WTC11 (cell line): ENCODE measurements at regions of chr1 and their contacts with region 1.

Region 1: GRCh38 chr1:32521165-32521564 is 18.1 kb upstream of the ZBTB8A start:
- DNase-seq: no peak
- ATAC-seq: peak; percentile 16; the same call in 1 of the 2 replicates
- H3K4me3 Mint-ChIP-seq: peak overlapping the region; percentile 67
- H3K27ac Mint-ChIP-seq: 0 out of 2 replicates have a peak overlapping the region, but pooled peaks have one; percentile 87
- H3K4me1 Mint-ChIP-seq: peaks cover 2% of the 10 kb centered on the region; the same call in 1 of the 2 replicates
- H3K27me3 Mint-ChIP-seq: no peaks in the 10 kb centered on the region; the same call in none of the 2 replicates
- CTCF ChIP-seq: no peak

Region 2: DNA sequence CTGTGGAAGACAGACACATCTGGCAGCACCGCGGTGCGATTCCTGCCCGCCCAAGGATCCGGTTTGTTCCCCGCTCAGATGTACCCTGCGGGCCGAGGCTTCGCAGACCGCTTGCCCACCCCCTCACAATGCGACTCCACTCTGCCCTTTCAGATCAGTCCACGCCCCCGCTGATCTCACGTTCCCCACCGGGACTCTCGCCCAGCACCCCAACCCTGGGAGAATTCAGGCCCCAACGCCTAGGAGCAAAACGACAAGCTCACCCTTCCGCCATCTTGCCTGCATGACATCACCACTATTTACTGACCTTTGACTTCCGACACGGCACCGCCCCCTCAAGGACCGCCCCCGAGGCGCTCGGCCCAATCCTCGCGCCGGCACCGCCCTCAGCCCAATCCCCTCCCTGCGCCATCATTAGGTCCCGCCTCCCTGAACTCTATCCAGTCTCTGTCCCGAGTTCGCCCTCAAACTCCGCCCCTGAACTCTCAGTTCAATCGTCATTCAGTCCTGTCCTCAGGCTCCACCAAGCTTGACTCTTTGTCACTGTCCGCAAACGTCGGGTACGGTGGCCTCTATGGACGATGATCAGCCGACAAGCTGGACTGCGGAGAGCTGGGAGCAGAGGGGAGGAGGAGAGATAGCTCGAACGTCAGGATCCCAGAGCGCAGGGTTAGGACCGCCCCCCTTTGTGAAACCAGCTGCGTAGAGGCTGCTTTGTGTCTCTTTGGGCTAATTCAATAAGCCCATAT is 126.8 kb before region 1 on chr1 and contains the start of gene BSDC1:
- CTCF ChIA-PET with region 1: interaction called, 21 read pairs
- POLR2A ChIA-PET with region 1: interaction called, 4 read pairs
- DNase-seq: peak; percentile 99
- ATAC-seq: peak; percentile 97
- H3K4me3 Mint-ChIP-seq: peak within 1 kb of the TSS; percentile 98
- H3K27ac Mint-ChIP-seq: peak within 1 kb of the TSS; percentile 100
- H3K4me1 Mint-ChIP-seq: peaks cover 12% of the 10 kb centered on the region
- H3K27me3 Mint-ChIP-seq: no peaks in the 10 kb centered on the region
- CTCF ChIP-seq: no peak
- total RNA-seq, gene BSDC1: 42.4 to 44.3 TPM (median 43.6 TPM) in 3 replicates

Region 3: GRCh38 chr1:32448773-32449456 is 72.2 kb before region 1 on chr1:
- CTCF ChIA-PET with region 1: interaction called, 16 read pairs
- POLR2A ChIA-PET with region 1: no interaction called
- DNase-seq: peak; percentile 56
- ATAC-seq: no peak
- H3K4me3 Mint-ChIP-seq: no peak overlapping the region
- H3K27ac Mint-ChIP-seq: no peak overlapping the region
- H3K4me1 Mint-ChIP-seq: peaks cover 37% of the 10 kb centered on the region
- H3K27me3 Mint-ChIP-seq: peaks cover 7% of the 10 kb centered on the region
- CTCF ChIP-seq: peak; percentile 42; the same call in 1 of the 2 replicates

Region 4: DNA sequence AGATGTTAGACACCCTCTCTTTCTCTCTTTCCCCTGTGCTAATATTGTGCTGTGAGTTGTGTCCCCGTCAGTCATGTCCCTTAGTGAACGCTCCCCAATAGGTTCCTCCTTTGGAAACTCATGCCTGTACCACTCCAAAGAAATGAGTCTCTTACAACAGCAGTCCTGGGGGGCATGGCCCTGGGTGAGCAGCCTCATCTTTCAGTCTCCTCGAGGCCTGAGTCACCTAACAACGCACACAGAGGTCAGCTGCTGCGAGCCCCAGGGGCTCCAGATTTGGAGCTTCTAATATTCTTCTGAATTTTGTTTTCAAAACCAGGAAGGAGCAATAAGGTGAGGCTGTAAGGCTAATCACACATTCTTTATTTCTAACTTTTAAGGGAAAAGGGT is 12.4 kb before region 1 on chr1:
- CTCF ChIA-PET with region 1: interaction called, 21 read pairs
- POLR2A ChIA-PET with region 1: interaction called, 6 read pairs
- DNase-seq: no peak
- ATAC-seq: no peak
- H3K4me3 Mint-ChIP-seq: no peak overlapping the region
- H3K27ac Mint-ChIP-seq: no peak overlapping the region
- H3K4me1 Mint-ChIP-seq: no peaks in the 10 kb centered on the region
- H3K27me3 Mint-ChIP-seq: no peaks in the 10 kb centered on the region; the same call in 1 of the 2 replicates
- CTCF ChIP-seq: no peak

Region 5: DNA sequence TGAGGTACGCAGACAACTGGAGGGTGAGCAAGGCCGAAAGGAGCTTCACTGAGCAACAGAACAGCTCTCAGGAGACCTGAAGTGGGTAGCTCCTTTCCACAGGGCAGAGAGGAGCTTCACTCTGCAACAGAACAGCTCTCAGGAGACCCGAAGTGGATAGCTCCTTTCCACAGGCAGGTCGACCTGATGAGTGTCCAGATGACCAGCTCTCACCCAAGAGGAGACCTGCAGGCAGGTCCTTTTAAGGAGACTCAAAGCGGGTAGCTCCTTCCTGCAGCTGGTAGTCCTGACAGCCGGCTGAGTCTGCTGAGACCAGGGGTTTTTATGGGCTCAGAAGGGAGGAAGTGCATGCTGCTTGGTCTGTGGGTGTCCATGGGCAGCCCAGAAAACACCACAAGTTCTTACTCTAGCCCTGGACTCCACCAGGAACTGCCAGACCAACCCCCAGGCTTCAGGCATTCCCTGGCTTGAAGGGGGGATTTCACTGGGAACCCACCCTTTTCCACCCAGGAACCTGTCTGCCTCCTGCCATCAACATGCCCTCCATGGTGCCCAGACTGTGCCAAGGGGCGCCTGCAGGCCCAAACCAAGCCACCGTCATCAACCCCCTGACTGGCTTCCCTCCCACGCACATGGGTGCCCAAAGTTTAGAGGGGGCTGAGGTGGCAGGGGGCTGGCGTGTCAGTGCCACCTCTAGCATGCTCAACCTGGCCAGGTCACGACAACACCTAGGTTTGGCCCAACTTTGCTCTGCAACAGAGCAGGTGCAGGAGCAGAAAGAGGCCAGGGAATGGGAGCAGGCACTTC is 85.6 kb after region 1 on chr1:
- CTCF ChIA-PET with region 1: interaction called, 14 read pairs
- POLR2A ChIA-PET with region 1: no interaction called
- DNase-seq: no peak
- ATAC-seq: no peak
- H3K4me3 Mint-ChIP-seq: no peak overlapping the region
- H3K27ac Mint-ChIP-seq: no peak overlapping the region
- H3K4me1 Mint-ChIP-seq: no peaks in the 10 kb centered on the region
- H3K27me3 Mint-ChIP-seq: no peaks in the 10 kb centered on the region
- CTCF ChIP-seq: no peak

Region 6: GRCh38 chr1:32619701-32620485 is 98.7 kb after region 1 on chr1:
- CTCF ChIA-PET with region 1: interaction called, 15 read pairs
- POLR2A ChIA-PET with region 1: no interaction called
- DNase-seq: no peak
- ATAC-seq: no peak
- H3K4me3 Mint-ChIP-seq: no peak overlapping the region
- H3K27ac Mint-ChIP-seq: no peak overlapping the region
- H3K4me1 Mint-ChIP-seq: no peaks in the 10 kb centered on the region
- H3K27me3 Mint-ChIP-seq: no peaks in the 10 kb centered on the region
- CTCF ChIP-seq: no peak

Region 7: GRCh38 chr1:32650752-32651460 is 129.7 kb after region 1 on chr1 and contains the start of gene RBBP4:
- CTCF ChIA-PET with region 1: interaction called, 21 read pairs
- POLR2A ChIA-PET with region 1: interaction called, 13 read pairs
- DNase-seq: peak; percentile 98
- ATAC-seq: peak; percentile 93
- H3K4me3 Mint-ChIP-seq: peak within 1 kb of the TSS; percentile 99
- H3K27ac Mint-ChIP-seq: peak within 1 kb of the TSS; percentile 100
- H3K4me1 Mint-ChIP-seq: peaks cover 33% of the 10 kb centered on the region
- H3K27me3 Mint-ChIP-seq: no peaks in the 10 kb centered on the region; the same call in 1 of the 2 replicates
- CTCF ChIP-seq: no peak
- total RNA-seq, gene RBBP4: 331 to 339 TPM (median 333 TPM) in 3 replicates